Natural killer cell (primary cell): ENCODE measurements at regions of chr19 and their contacts with region 1.

Region 1: DNA sequence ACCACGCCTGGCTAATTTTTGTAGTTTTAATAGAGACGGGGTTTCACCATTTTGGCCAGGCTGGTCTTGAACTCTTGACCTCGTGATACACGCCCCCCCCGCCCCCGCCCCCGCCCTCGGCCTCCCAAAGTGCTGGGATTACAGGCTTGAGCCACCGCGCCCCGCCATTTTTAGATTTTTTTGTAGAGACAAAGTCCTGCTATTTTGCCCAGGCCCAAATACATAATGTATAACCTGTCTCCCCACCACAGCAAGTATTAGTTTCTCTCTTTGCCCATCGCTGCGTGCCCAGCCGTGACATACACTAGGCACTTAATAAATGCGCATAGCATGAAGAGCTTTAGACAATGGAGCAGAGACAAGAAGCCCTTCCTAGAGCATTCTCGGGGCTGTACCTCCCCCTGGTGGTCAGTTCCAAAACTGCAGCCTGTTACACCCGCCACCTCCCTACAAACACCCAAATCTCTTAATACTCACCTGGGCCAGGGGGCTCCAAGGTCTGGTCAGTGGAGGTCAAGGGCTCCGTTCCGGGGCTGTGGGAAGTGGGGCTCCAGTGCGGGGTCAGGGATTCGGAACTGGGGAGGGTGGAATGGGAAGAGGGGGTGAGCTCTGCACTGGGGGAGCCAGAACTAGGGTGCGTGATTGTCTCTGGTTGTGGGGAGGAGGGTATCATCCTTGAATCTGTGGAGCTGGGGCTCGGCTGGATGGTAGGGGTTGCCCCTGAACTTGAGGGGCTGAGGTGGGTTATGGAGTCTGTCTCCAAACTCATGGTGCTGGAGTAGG is 22.5 kb downstream of the IQCN start:
- DNase-seq: peak; percentile 79 to 91
- ATAC-seq: peak; percentile 86 to 98 (median 88)
- H3K4me3 ChIP-seq: no peak overlapping the region
- H3K4me3 Mint-ChIP-seq: no peak overlapping the region
- H3K27ac ChIP-seq: no peak overlapping the region
- H3K27ac Mint-ChIP-seq: no peak overlapping the region
- H3K4me1 ChIP-seq: peaks cover 14% of the 10 kb centered on the region
- H3K4me1 Mint-ChIP-seq: peaks cover 0 to 5% of the 10 kb centered on the region in 2 donors
- H3K27me3 ChIP-seq: no peaks in the 10 kb centered on the region
- H3K27me3 Mint-ChIP-seq: peaks cover 16 to 25% of the 10 kb centered on the region in 2 donors
- CTCF ChIP-seq: peak; percentile 81

Region 2: GRCh38 chr19:17938092-17938845 is 313.5 kb before region 1 on chr19:
- intact Hi-C with region 1: loop called (anchors 5 kb)
- DNase-seq: peak; percentile 85 to 92
- ATAC-seq: peak; percentile 94 to 98 (median 98)
- H3K4me3 ChIP-seq: no peak overlapping the region
- H3K4me3 Mint-ChIP-seq: no peak overlapping the region
- H3K27ac ChIP-seq: no peak overlapping the region
- H3K27ac Mint-ChIP-seq: no peak overlapping the region
- H3K4me1 ChIP-seq: peaks cover 10% of the 10 kb centered on the region
- H3K4me1 Mint-ChIP-seq: peaks cover 6% of the 10 kb centered on the region in 2 donors
- H3K27me3 ChIP-seq: no peaks in the 10 kb centered on the region
- H3K27me3 Mint-ChIP-seq: no peaks in the 10 kb centered on the region
- CTCF ChIP-seq: peak; percentile 81

Region 3: DNA sequence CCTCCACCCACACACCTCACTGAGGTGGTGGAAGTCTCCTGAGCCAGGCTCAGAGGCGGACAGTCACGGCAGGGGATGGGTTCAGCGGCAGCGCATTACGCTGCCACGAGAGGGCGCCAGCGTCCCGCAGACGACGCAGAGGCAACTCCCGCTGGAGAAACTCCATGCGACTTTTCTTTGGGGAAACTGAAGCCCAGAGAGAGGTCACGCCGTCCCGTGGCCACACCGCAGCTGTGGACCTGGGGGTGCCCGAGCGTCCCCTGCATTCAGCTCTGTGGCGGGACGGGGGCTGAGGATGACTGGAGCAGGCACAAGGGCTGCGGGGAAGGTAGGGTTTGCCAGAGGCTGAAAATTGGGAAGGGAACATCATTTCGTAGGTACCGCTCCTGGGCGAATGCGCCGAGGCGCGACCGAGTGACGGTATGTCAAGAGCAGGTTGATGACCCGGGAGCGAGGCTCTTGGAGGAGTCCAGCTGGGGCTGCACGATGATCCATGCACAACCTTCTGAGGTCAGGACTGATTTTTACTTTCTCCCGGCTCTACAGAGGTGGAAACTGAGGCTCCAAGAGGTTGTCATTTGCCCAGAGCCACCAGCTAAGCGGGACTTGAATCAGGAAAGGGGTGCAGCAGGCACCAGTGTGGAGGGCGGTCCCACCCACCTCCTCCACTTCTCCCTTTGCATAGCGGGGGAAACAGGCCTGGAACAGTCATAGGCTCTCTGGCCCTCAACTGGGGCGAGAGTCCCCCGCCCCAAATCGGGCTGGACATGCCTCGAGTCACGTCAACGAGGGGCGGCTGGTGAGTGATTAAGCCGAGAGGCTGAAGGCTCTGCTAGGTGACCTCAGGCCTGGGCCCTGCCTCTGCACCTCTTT is 244.5 kb before region 1 on chr19:
- intact Hi-C with region 1: loop called (anchors 2 kb)
- DNase-seq: peak; percentile 82 to 92
- ATAC-seq: peak; percentile 60 to 82 (median 66)
- H3K4me3 ChIP-seq: peak overlapping the region; percentile 33
- H3K4me3 Mint-ChIP-seq: peak overlapping the region; percentile 95
- H3K27ac ChIP-seq: peak overlapping the region; percentile 77
- H3K27ac Mint-ChIP-seq: peak overlapping the region; percentile 94 to 95
- H3K4me1 ChIP-seq: peaks cover 41% of the 10 kb centered on the region
- H3K4me1 Mint-ChIP-seq: peaks cover 11 to 25% of the 10 kb centered on the region in 2 donors
- H3K27me3 ChIP-seq: no peaks in the 10 kb centered on the region
- H3K27me3 Mint-ChIP-seq: no peaks in the 10 kb centered on the region
- CTCF ChIP-seq: peak; percentile 99

Region 4: GRCh38 chr19:18117692-18118378 is 133.9 kb before region 1 on chr19:
- intact Hi-C with region 1: loop called (anchors 2 kb)
- DNase-seq: peak; percentile 98 to 99
- ATAC-seq: peak; percentile 89 to 96 (median 92)
- H3K4me3 ChIP-seq: peak overlapping the region; percentile 83
- H3K4me3 Mint-ChIP-seq: peak overlapping the region; percentile 91
- H3K27ac ChIP-seq: peak overlapping the region; percentile 74
- H3K27ac Mint-ChIP-seq: peak overlapping the region; percentile 91 to 99
- H3K4me1 ChIP-seq: peaks cover 46% of the 10 kb centered on the region
- H3K4me1 Mint-ChIP-seq: peaks cover 30 to 61% of the 10 kb centered on the region in 2 donors
- H3K27me3 ChIP-seq: no peaks in the 10 kb centered on the region
- H3K27me3 Mint-ChIP-seq: no peaks in the 10 kb centered on the region
- CTCF ChIP-seq: no peak

Region 5: DNA sequence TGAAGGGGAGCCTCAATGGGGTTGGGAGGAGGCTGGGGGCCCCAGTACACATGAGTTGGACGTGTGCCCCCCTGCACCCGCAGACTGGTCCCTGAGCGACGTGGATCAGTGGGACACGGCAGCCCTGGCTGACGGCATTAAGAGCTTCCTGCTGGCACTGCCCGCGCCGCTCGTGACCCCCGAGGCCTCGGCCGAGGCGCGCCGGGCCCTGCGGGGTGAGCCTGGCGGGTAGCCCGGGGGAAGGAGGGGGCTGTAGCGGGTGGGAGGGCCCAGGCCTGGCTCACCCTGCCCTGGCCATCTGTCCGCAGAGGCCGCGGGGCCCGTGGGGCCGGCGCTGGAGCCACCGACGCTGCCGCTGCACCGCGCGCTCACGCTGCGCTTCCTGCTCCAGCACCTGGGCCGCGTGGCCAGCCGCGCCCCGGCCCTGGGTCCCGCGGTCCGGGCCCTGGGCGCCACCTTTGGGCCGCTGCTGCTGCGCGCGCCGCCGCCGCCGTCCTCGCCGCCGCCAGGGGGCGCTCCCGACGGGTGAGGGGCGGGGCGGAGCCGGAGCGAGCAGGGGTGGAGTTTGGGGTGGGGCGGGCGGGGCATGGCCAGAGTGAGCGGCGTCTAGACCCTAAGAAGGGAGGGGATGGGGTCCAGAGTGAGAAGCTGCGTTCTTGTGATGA is 90.7 kb before region 1 on chr19:
- intact Hi-C with region 1: loop called (anchors 5 kb)
- DNase-seq: peak; percentile 85 to 89
- ATAC-seq: peak; percentile 98 to 99 (median 99)
- H3K4me3 ChIP-seq: no peak overlapping the region
- H3K4me3 Mint-ChIP-seq: no peak overlapping the region
- H3K27ac ChIP-seq: no peak overlapping the region
- H3K27ac Mint-ChIP-seq: peak overlapping the region in 1 of 2 donors; percentile 42
- H3K4me1 ChIP-seq: peaks cover 16% of the 10 kb centered on the region
- H3K4me1 Mint-ChIP-seq: peaks cover 0 to 13% of the 10 kb centered on the region in 2 donors
- H3K27me3 ChIP-seq: no peaks in the 10 kb centered on the region
- H3K27me3 Mint-ChIP-seq: no peaks in the 10 kb centered on the region
- CTCF ChIP-seq: peak; percentile 65

Region 6: DNA sequence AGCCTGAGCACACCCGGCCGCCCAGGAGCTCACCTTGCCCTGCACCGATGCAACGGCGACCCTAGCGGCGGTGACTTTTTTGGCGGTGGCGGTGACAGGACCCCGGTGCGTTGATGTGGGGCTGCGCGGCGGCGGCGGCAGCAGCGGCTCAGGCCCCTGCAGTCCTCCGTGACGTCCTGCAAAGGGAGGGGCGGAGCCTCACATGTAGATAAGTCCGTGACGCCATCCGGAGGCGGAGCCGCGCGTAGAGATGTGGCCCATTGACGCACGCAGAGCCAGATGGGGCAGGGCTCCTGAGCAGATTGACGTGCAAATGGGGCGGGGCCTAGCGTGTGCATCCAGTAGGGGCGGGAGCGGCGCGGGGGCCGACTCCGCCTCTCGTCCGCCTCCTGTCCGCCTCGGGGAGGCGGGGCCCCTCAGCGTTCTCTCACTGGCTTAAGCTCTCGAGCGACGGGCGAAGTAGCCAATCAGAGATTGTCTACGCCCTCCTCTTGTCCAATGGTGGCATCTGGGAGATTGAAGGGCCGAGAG is 47.9 kb before region 1 on chr19 and contains the start of gene RAB3A:
- intact Hi-C with region 1: loop called (anchors 2 kb)
- DNase-seq: peak; percentile 98 to 100
- ATAC-seq: peak; percentile 90 to 98 (median 91)
- H3K4me3 ChIP-seq: peak within 1 kb of the TSS; percentile 79
- H3K4me3 Mint-ChIP-seq: peak within 1 kb of the TSS; percentile 97
- H3K27ac ChIP-seq: peak within 1 kb of the TSS; percentile 81
- H3K27ac Mint-ChIP-seq: peak within 1 kb of the TSS; percentile 92 to 96
- H3K4me1 ChIP-seq: peaks cover 27% of the 10 kb centered on the region
- H3K4me1 Mint-ChIP-seq: peaks cover 23 to 32% of the 10 kb centered on the region in 2 donors
- H3K27me3 ChIP-seq: peaks cover 2% of the 10 kb centered on the region
- H3K27me3 Mint-ChIP-seq: peaks cover 4 to 9% of the 10 kb centered on the region in 2 donors
- CTCF ChIP-seq: no peak
- total RNA-seq, gene RAB3A: 5.2 to 7.8 (median 7.6) TPM